ENCODE measurements at regions of chr19 and their contacts with region 1.

Region 1: DNA sequence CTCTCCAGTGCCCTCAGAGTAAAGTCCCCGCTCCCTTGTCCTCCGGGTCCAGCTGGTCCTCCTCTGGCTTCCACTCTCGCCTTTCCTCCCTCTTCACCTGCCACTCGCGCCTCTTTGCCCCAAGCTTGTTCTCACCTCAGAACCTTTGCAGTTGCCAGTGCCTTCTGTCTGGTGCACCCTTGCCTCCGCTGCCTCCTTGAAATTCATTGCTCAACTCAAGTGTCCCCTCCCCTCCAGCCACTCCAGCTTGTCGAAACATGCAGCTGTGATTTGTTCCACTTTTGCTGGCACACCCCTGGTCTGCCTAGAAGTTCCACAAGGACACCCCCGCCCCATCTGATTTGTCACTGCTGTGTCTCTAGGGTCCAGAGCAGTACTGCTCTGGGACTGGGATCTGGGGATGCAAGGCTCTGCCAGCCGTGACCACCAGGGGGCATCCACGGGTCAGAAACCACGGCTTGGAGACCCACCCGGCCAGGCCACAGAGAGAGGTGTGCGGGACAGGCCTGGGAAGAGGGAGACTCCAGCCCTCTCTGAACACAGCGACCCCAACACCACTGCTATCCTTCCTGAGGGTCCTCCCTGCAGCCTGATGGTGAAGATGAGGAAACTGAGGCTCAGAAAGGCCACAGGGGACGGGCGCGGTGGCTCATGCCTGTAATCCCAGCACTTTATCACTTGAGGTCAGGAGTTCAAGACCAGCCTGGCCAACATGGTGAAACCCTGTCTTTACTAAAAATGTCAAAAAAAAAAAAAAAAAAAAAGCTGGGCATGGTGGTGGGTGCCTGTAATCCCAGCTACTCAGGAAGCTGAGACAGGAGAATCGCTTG is 49.9 kb downstream of the AP1M1 start:
- DNase-seq: peak; percentile 78
- H3K4me3 Mint-ChIP-seq: no peak overlapping the region
- H3K27ac Mint-ChIP-seq: no peak overlapping the region
- H3K4me1 Mint-ChIP-seq: peaks cover 7% of the 10 kb centered on the region
- H3K27me3 Mint-ChIP-seq: peaks cover 17% of the 10 kb centered on the region
- CTCF ChIP-seq: peak; percentile 92

Region 2: DNA sequence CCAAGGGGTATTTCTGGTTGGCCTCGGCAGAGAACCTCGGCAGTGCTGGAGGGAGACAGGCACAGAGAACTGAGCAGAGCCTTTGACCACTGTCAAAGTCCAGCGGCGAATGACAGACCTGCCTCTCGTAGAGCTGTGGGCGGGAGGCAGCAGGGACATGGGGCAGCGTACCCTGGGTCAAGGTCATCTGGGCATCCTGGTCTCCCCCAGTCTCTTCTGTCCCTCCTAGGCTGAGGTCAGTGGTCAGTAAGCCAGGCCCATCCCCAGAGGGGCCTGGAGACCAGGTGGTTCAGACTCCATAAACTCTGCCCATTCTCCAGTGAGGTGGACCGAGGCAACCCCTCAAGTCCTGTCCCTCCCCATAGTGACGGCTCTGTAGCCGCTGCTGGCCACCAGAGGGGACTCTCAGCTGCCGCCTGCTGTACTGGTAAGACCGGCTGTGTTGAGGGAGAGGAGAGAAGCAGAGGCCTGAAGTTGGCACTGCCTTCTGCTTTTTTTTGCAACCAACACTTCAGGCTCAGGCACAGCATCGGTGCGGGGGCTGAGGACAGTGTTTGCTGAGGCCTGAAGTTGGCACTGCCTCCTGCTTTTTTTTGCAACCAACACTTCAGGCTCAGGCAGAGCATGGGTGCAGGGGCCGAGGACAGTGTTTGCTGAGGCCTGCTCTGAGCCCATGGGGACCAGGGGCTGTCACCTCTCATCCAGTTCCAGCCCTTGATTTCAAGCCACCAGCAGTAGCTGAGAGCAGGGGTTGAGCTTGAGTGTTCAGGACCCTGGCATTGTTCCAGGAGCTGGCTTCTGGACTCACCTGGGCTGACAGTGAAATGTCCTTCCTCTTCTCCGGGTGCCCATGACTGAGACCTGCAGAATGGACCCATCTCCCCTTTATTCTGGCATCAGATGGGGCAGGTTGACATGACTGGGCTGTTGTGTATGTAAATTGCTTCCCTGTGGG is 767.9 kb before region 1 on chr19 and contains the start of gene PGLYRP2:
- CTCF ChIA-PET with region 1: no interaction called
- POLR2A ChIA-PET with region 1: no interaction called
- intact Hi-C with region 1: no loop called
- DNase-seq: peak; percentile 40
- H3K4me3 Mint-ChIP-seq: no peak within 1 kb of the TSS
- H3K27ac Mint-ChIP-seq: no peak within 1 kb of the TSS
- H3K4me1 Mint-ChIP-seq: no peaks in the 10 kb centered on the region
- H3K27me3 Mint-ChIP-seq: no peaks in the 10 kb centered on the region
- CTCF ChIP-seq: no peak
- total RNA-seq, gene PGLYRP2: not detected in 2 replicates

Region 3: GRCh38 chr19:16185768-16186123 is 61.8 kb before region 1 on chr19:
- CTCF ChIA-PET with region 1: no interaction called
- POLR2A ChIA-PET with region 1: no interaction called
- intact Hi-C with region 1: no loop called
- DNase-seq: peak; percentile 30
- H3K4me3 Mint-ChIP-seq: peak overlapping the region; percentile 100
- H3K27ac Mint-ChIP-seq: peak overlapping the region; percentile 100
- H3K4me1 Mint-ChIP-seq: peaks cover 17% of the 10 kb centered on the region
- H3K27me3 Mint-ChIP-seq: no peaks in the 10 kb centered on the region
- CTCF ChIP-seq: peak; percentile 34

Region 4: DNA sequence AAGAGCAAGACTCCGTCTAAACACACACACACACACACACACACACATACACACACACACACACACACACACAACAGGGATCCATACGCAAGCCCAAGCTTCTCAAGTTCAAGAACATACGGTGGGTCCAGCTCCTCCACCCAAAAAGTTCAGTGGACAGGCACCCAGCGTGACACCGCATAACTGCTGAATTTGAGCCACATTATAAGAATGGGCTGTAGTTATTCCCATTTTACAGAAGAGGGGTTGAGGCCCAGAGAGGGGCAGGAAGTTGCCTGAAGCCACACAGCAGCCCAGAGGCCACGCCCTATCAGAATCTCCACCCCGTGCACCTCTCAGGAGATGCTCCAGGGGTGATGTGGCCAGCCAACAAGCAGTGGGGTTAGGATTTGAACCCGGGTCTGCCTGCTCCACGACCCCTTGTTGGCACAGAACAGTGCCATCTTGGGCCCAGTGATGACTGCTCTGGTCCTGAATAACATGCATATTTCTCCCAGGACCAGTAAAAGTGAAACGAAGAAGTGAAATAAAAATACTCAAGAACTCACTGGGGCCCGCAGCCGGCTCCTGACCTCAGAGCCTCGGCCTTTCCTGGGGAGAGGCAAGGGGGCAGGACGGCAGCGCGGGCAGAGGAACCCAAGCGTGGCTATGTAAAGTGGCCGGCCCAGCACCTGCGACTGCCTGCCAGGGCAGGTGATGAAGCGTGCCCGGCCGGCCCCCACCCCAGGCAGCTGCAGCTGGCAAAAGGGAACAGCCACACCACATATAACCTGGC is 12.0 kb after region 1 on chr19:
- CTCF ChIA-PET with region 1: interaction called, 12 read pairs
- POLR2A ChIA-PET with region 1: no interaction called
- intact Hi-C with region 1: no loop called
- DNase-seq: no peak
- H3K4me3 Mint-ChIP-seq: no peak overlapping the region
- H3K27ac Mint-ChIP-seq: no peak overlapping the region
- H3K4me1 Mint-ChIP-seq: no peaks in the 10 kb centered on the region
- H3K27me3 Mint-ChIP-seq: peaks cover 25% of the 10 kb centered on the region
- CTCF ChIP-seq: no peak

Region 5: GRCh38 chr19:16266586-16266942 is 19.0 kb after region 1 on chr19:
- CTCF ChIA-PET with region 1: interaction called, 15 read pairs
- POLR2A ChIA-PET with region 1: no interaction called
- intact Hi-C with region 1: no loop called
- DNase-seq: no peak
- H3K4me3 Mint-ChIP-seq: no peak overlapping the region
- H3K27ac Mint-ChIP-seq: no peak overlapping the region
- H3K4me1 Mint-ChIP-seq: no peaks in the 10 kb centered on the region
- H3K27me3 Mint-ChIP-seq: peaks cover 26% of the 10 kb centered on the region
- CTCF ChIP-seq: no peak

Region 6: DNA sequence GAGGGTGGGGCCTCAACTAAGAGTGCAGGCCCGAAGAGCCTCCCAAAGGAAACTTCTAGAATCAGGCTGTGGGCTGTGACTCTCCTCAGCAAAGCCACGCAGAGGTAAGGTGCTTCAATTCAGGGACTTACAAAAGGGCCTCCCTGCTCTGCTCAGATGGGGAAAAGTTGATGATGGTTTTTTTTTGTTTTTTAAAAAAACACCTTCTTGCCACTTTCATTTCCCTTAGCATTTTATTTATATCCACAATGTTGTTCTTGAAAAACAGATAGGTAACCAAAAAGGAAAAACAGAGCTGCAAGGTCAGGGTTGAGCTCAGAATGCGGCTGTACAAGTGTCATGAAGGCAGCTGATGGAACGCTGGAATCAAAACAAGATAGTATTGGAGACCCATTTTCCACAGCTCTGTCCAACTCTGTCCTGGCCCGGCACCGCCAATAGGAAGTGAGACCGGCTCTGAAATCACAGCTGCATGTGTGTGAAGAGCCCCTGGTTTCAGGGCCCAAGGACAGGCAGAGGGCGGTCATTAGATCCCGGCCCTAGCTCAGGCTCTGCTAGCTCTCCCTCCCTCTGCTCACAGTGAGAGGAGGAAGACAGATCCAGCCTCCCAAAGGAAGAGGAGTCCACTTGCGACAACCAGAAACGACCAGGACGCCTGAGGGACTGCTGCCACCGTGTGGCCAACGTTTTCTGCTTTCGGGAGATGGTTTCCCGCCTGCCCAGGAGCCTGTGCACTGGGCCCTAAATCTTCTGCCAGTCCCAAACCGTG is 135.4 kb after region 1 on chr19:
- CTCF ChIA-PET with region 1: interaction called, 90 read pairs
- POLR2A ChIA-PET with region 1: no interaction called
- intact Hi-C with region 1: loop called (anchors 1 kb)
- DNase-seq: peak; percentile 72
- H3K4me3 Mint-ChIP-seq: no peak overlapping the region
- H3K27ac Mint-ChIP-seq: no peak overlapping the region
- H3K4me1 Mint-ChIP-seq: no peaks in the 10 kb centered on the region
- H3K27me3 Mint-ChIP-seq: no peaks in the 10 kb centered on the region
- CTCF ChIP-seq: peak; percentile 59

Region 7: DNA sequence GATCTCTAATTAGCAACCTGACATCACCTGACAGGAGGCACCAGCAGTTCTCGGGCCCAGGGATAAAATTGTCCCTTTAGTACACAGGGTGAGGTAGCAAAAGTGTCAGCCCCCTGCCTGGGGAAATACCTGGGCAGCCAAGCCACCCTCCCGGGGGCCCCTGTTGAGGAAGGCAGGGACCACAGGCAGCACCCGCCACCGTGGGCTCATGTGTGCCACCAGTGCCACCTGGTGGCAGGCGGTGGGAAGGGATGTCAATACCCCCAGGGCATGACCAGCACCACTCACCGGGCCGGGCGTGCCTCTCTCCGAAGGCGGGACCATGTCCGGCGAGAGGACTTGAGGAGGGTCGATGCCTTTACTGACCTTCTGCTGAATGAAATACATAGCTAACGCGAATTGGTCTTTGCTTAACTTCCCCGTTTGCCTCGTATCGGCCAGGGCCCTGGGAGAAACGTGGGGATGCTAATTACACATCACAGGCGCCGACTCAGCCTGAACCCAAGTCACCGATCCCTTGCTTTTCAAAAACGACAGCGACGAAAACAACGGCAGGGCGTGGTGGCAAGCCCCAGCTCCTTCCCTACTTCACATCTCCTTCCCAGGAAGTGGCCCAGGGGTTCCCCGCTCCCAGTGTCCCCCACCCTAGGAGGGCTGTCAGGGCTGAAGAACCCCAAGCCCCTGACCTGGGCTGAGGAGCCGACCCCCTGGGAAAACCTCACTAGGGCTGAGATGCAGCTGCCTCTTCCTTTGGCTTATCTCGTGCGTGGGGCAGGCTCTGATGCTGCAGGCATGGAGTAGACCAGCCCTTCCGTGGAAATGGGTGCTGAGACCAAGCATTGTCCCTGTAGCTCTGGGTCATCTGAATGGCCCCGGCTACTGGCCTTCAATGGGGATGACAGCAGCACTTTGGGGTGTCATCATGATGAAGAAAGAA is 170.4 kb after region 1 on chr19:
- CTCF ChIA-PET with region 1: interaction called, 56 read pairs
- POLR2A ChIA-PET with region 1: interaction called, 4 read pairs
- intact Hi-C with region 1: loop called (anchors 1 kb)
- DNase-seq: peak; percentile 53
- H3K4me3 Mint-ChIP-seq: no peak overlapping the region
- H3K27ac Mint-ChIP-seq: no peak overlapping the region
- H3K4me1 Mint-ChIP-seq: no peaks in the 10 kb centered on the region
- H3K27me3 Mint-ChIP-seq: no peaks in the 10 kb centered on the region
- CTCF ChIP-seq: peak; percentile 76